RWPE1 (cell line): ENCODE measurements at regions of chr19 and their contacts with region 1.

Region 1: DNA sequence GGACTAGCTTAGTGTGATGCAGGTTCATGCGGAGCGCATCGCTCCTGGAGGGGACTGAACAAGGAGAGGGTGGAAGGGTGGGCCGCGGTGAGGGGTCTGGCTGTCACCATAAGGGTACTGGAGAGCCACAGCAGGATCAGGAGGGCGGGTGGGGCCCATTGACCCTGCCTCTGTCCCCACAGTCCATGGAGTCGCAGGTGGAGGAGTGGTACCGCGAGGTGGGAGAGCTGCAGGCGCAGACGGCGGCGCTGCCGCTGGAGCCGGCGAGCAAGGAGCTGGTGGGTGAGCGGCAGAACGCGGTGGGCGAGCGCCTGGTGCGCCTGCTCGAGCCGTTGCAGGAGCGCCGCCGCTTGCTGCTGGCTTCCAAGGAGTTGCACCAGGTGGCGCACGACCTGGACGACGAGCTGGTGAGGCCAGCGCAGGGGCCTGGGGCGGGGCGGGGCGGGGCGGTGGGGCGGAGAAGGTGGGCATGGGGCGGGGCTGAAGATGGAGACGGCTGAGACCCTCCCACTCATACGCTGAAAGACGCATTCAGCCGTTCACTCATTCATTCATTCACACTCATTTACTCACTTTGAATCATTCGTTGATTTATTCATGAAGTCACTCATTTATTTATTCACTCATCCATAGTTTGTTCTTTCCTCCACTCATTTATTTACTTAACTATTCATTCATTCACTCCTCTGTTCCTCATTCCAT is 27.5 kb upstream of the SHKBP1 start:
- DNase-seq: no peak
- H3K27ac ChIP-seq: no peak overlapping the region
- CTCF ChIP-seq: peak; percentile 69

Region 2: GRCh38 chr19:40433391-40434216 is 115.6 kb before region 1 on chr19:
- CTCF ChIA-PET with region 1: no interaction called
- POLR2A ChIA-PET with region 1: no interaction called
- DNase-seq: peak; percentile 80
- H3K27ac ChIP-seq: peak overlapping the region; percentile 96
- CTCF ChIP-seq: no peak

Region 3: GRCh38 chr19:40598121-40598917 is 49.2 kb after region 1 on chr19:
- CTCF ChIA-PET with region 1: interaction called, 12 read pairs
- POLR2A ChIA-PET with region 1: no interaction called
- DNase-seq: peak; percentile 80
- H3K27ac ChIP-seq: peak overlapping the region; percentile 99
- CTCF ChIP-seq: peak; percentile 95